PC-3 (cell line): ENCODE measurements at regions of chr5 and their contacts with region 1.

Region 1: DNA sequence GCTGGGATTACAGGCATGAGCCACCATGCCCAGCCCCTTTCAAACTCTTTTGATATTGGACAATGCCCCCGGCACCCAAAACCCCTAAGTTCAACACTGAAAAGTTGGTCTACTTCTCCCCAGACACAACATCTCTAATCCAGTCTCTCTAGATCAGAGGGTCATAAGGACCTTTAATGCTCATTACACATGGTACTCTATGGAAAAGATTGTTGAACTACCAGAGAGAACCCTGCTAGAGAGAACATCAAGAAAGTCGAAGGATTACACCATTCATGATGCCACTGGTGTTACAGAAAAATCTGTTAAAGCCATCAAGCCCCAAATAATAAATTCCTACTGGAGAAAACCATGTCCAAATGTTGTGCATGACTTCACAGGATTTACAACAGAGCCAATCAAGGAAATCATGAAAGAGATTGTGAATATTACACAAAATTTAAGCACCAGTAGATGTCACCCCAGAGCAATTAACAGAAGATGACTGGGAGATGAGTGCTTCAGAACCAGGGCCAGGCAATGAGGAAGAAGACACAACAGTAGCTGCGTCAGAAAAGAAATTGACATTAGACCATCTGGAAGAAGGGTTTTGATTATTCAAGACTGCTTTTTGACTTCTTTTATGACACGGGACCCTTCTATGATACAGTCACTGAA is 28.3 kb upstream of the NIPAL4 start:
- DNase-seq: peak; percentile 90
- ATAC-seq: peak; percentile 96
- H3K4me3 ChIP-seq: no peak overlapping the region
- H3K27ac ChIP-seq: no peak overlapping the region; the same call in 1 of the 2 replicates
- H3K4me1 ChIP-seq: peaks cover 8% of the 10 kb centered on the region
- H3K27me3 ChIP-seq: no peaks in the 10 kb centered on the region
- CTCF ChIP-seq: peak; percentile 88

Region 2: GRCh38 chr5:157366741-157367674 is 64.7 kb before region 1 on chr5:
- CTCF ChIA-PET with region 1: no interaction called
- POLR2A ChIA-PET with region 1: no interaction called
- intact Hi-C with region 1: loop called (anchors 2 kb)
- DNase-seq: peak; percentile 86
- ATAC-seq: peak; percentile 72
- H3K4me3 ChIP-seq: no peak overlapping the region
- H3K27ac ChIP-seq: 0 out of 2 replicates have a peak overlapping the region, but pooled peaks have one; percentile 1
- H3K4me1 ChIP-seq: peaks cover 33% of the 10 kb centered on the region
- H3K27me3 ChIP-seq: no peaks in the 10 kb centered on the region
- CTCF ChIP-seq: peak; percentile 98

Region 3: GRCh38 chr5:157471709-157472108 is 40.0 kb after region 1 on chr5:
- CTCF ChIA-PET with region 1: interaction called, 15 read pairs
- POLR2A ChIA-PET with region 1: interaction called, 3 read pairs
- intact Hi-C with region 1: loop called (anchors 1 kb)
- DNase-seq: peak; percentile 72
- ATAC-seq: peak; percentile 37
- H3K4me3 ChIP-seq: no peak overlapping the region
- H3K27ac ChIP-seq: no peak overlapping the region
- H3K4me1 ChIP-seq: peaks cover 18% of the 10 kb centered on the region
- H3K27me3 ChIP-seq: no peaks in the 10 kb centered on the region
- CTCF ChIP-seq: peak; percentile 97

Region 4: GRCh38 chr5:157603333-157604190 is 171.9 kb after region 1 on chr5:
- CTCF ChIA-PET with region 1: no interaction called
- POLR2A ChIA-PET with region 1: no interaction called
- intact Hi-C with region 1: loop called (anchors 2 kb)
- DNase-seq: peak; percentile 99
- ATAC-seq: peak; percentile 68
- H3K4me3 ChIP-seq: peak overlapping the region; percentile 39
- H3K27ac ChIP-seq: peak overlapping the region; percentile 96
- H3K4me1 ChIP-seq: peaks cover 71% of the 10 kb centered on the region
- H3K27me3 ChIP-seq: no peaks in the 10 kb centered on the region
- CTCF ChIP-seq: no peak

Region 5: GRCh38 chr5:157718519-157718918 is 286.8 kb after region 1 on chr5:
- CTCF ChIA-PET with region 1: interaction called, 6 read pairs
- POLR2A ChIA-PET with region 1: no interaction called
- intact Hi-C with region 1: loop called (anchors 1 kb)
- DNase-seq: peak; percentile 92
- ATAC-seq: peak; percentile 97
- H3K4me3 ChIP-seq: no peak overlapping the region
- H3K27ac ChIP-seq: peak overlapping the region; percentile 58
- H3K4me1 ChIP-seq: peaks cover 20% of the 10 kb centered on the region
- H3K27me3 ChIP-seq: no peaks in the 10 kb centered on the region
- CTCF ChIP-seq: peak; percentile 90